ENCODE measurements at regions of chr7 and their contacts with region 1.

Region 1: GRCh38 chr7:81752318-81752714 is 17.5 kb downstream of the HGF start:
- DNase-seq: no peak
- H3K4me3 ChIP-seq: no peak overlapping the region
- CTCF ChIP-seq: no peak

Region 2: GRCh38 chr7:81704595-81704994 is 47.7 kb before region 1 on chr7:
- in situ Hi-C with region 1: loop called (anchors 10 kb)
- DNase-seq: no peak
- H3K4me3 ChIP-seq: no peak overlapping the region
- CTCF ChIP-seq: no peak

Measured in astrocyte of the cerebellum (primary cell).